ENCODE measurements at regions of chr11 and their contacts with region 1.

Region 1: DNA sequence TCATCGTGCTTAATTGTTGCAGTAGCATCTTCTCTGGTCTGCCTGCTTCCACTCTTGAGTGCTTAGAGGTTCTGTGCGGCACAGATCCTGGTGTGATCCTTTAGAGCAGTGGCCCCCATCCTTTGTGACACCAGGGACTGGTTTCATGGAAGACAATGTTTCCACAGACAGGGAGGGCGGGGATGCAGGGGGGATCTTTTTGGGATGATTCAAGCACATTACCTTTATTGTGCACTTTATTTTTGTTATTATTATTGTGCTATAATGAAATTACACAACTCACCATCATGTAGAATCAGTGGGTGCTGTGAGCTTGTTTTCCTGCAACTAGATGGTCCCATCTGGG is 76.8 kb upstream of the SHANK2 start:
- DNase-seq: no peak
- ATAC-seq: no peak; the same call in 1 of the 2 replicates
- H3K4me3 ChIP-seq: no peak overlapping the region
- H3K27ac ChIP-seq: no peak overlapping the region
- H3K4me1 ChIP-seq: no peaks in the 10 kb centered on the region
- H3K27me3 ChIP-seq: no peaks in the 10 kb centered on the region
- CTCF ChIP-seq: no peak

Region 2: DNA sequence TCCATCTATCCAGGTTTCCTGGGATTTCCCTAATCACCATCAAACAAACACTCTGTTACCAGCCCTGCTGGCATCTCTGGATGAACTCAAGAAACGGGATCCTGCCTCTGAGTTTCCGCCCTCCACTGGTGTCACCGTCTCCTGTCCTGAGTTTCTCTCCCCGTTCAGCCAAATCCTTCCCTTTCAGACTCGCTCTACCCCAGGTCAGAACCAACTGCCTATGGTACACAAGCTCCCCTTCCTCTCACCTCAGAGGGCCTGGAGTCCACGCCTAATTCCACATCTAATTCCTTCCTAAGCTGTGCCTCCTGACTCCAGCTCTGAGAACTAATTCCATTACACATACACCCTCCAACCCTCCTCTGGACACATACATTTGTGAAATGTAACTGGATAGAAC is 172.8 kb before region 1 on chr11:
- CTCF ChIA-PET with region 1: no interaction called
- POLR2A ChIA-PET with region 1: interaction called, 19 read pairs
- in situ Hi-C with region 1: no loop called
- intact Hi-C with region 1: no loop called
- DNase-seq: no peak
- ATAC-seq: no peak
- H3K4me3 ChIP-seq: no peak overlapping the region
- H3K27ac ChIP-seq: no peak overlapping the region
- H3K4me1 ChIP-seq: no peaks in the 10 kb centered on the region
- H3K27me3 ChIP-seq: peaks cover 2% of the 10 kb centered on the region; the same call in 1 of the 2 replicates
- CTCF ChIP-seq: no peak

Region 3: GRCh38 chr11:71355266-71355665 is 26.1 kb after region 1 on chr11:
- CTCF ChIA-PET with region 1: no interaction called
- POLR2A ChIA-PET with region 1: no interaction called
- in situ Hi-C with region 1: no loop called
- intact Hi-C with region 1: no loop called
- DNase-seq: no peak
- ATAC-seq: no peak
- H3K4me3 ChIP-seq: no peak overlapping the region
- H3K27ac ChIP-seq: no peak overlapping the region
- H3K4me1 ChIP-seq: no peaks in the 10 kb centered on the region
- H3K27me3 ChIP-seq: peaks cover 13% of the 10 kb centered on the region
- CTCF ChIP-seq: no peak

Region 4: GRCh38 chr11:72091005-72091691 is 762.0 kb after region 1 on chr11:
- CTCF ChIA-PET with region 1: no interaction called
- POLR2A ChIA-PET with region 1: no interaction called
- in situ Hi-C with region 1: no loop called
- intact Hi-C with region 1: no loop called
- DNase-seq: no peak
- ATAC-seq: peak; percentile 92
- H3K4me3 ChIP-seq: no peak overlapping the region
- H3K27ac ChIP-seq: no peak overlapping the region
- H3K4me1 ChIP-seq: no peaks in the 10 kb centered on the region
- H3K27me3 ChIP-seq: no peaks in the 10 kb centered on the region
- CTCF ChIP-seq: peak; percentile 92